Ovary (tissue), 10 donors: ENCODE measurements at regions of chr19 and their contacts with region 1.

Region 1: GRCh38 chr19:11995174-11995573 is 30.3 kb downstream of the ZNF763 start:
- DNase-seq: no peak
- H3K4me3 ChIP-seq: no peak overlapping the region
- H3K27ac ChIP-seq: no peak overlapping the region
- H3K4me1 ChIP-seq: no peaks in the 10 kb centered on the region
- H3K27me3 ChIP-seq: no peaks in the 10 kb centered on the region
- CTCF ChIP-seq: no peak
- EP300 ChIP-seq: no peak
- POLR2A ChIP-seq: no peak

Region 2: GRCh38 chr19:11798391-11799330 is 196.5 kb before region 1 on chr19 and contains the start of gene ZNF491:
- intact Hi-C with region 1: loop called in 1 of 4 experiments (anchors 10 kb)
- DNase-seq: peak; percentile 86 to 92 (median 92)
- H3K4me3 ChIP-seq: peak within 1 kb of the TSS; percentile 58
- H3K27ac ChIP-seq: peak within 1 kb of the TSS; percentile 54 to 56
- H3K4me1 ChIP-seq: peaks cover 7% of the 10 kb centered on the region
- H3K27me3 ChIP-seq: no peaks in the 10 kb centered on the region
- CTCF ChIP-seq: peak in 1 of 3 donors; percentile 12
- EP300 ChIP-seq: no peak
- POLR2A ChIP-seq: no peak
- total RNA-seq, gene ZNF491: 2.2 to 6.5 (median 4.5) TPM

Region 3: GRCh38 chr19:11814029-11814699 is 181.0 kb before region 1 on chr19 and contains the start of gene ZNF440:
- intact Hi-C with region 1: no loop called
- DNase-seq: peak; percentile 93 to 97 (median 95)
- H3K4me3 ChIP-seq: peak within 1 kb of the TSS; percentile 62
- H3K27ac ChIP-seq: peak within 1 kb of the TSS; percentile 5 to 70
- H3K4me1 ChIP-seq: no peaks in the 10 kb centered on the region
- H3K27me3 ChIP-seq: no peaks in the 10 kb centered on the region
- CTCF ChIP-seq: no peak
- EP300 ChIP-seq: no peak
- POLR2A ChIP-seq: peak; percentile 67
- total RNA-seq, gene ZNF440: 6.6 to 21.6 (median 12.1) TPM

Region 4: GRCh38 chr19:11924886-11925650 is 70.1 kb before region 1 on chr19 and contains the start of gene ZNF700:
- intact Hi-C with region 1: loop called in 1 of 4 experiments (anchors 10 kb)
- DNase-seq: peak; percentile 93 to 97 (median 95)
- H3K4me3 ChIP-seq: peak within 1 kb of the TSS; percentile 85
- H3K27ac ChIP-seq: peak within 1 kb of the TSS; percentile 38 to 91
- H3K4me1 ChIP-seq: peaks cover 15% of the 10 kb centered on the region
- H3K27me3 ChIP-seq: no peaks in the 10 kb centered on the region
- CTCF ChIP-seq: peak in 1 of 3 donors; percentile 20
- EP300 ChIP-seq: peak; percentile 74
- POLR2A ChIP-seq: peak; percentile 76
- total RNA-seq, gene ZNF700: 8.6 to 22.3 (median 14.0) TPM